ENCODE measurements at regions of chr5 and their contacts with region 1.

Region 1: GRCh38 chr5:79560771-79561524 is 47.0 kb upstream of the HOMER1 start:
- DNase-seq: no peak
- H3K4me3 ChIP-seq: no peak overlapping the region
- H3K27ac ChIP-seq: no peak overlapping the region
- H3K4me1 ChIP-seq: peaks cover 0 to 3% (median 0%) of the 10 kb centered on the region in 4 donors
- H3K27me3 ChIP-seq: no peaks in the 10 kb centered on the region
- CTCF ChIP-seq: no peak
- EP300 ChIP-seq: no peak
- POLR2A ChIP-seq: no peak

Region 2: GRCh38 chr5:79284846-79285245 is 276.1 kb before region 1 on chr5:
- in situ Hi-C with region 1: no loop called
- intact Hi-C with region 1: no loop called
- DNase-seq: no peak
- H3K4me3 ChIP-seq: no peak overlapping the region
- H3K27ac ChIP-seq: peak overlapping the region in 1 of 4 donors; percentile 20
- H3K4me1 ChIP-seq: peaks cover 0 to 3% (median 0%) of the 10 kb centered on the region in 4 donors
- H3K27me3 ChIP-seq: no peaks in the 10 kb centered on the region
- CTCF ChIP-seq: no peak
- EP300 ChIP-seq: no peak
- POLR2A ChIP-seq: no peak

Region 3: GRCh38 chr5:80083101-80083890 is 522.3 kb after region 1 on chr5:
- in situ Hi-C with region 1: no loop called
- intact Hi-C with region 1: loop called (anchors 10 kb)
- DNase-seq: no peak
- H3K4me3 ChIP-seq: peak overlapping the region in 1 of 4 donors; percentile 36
- H3K27ac ChIP-seq: peak overlapping the region; percentile 39 to 78 (median 60)
- H3K4me1 ChIP-seq: peaks cover 0 to 9% (median 4%) of the 10 kb centered on the region in 4 donors
- H3K27me3 ChIP-seq: no peaks in the 10 kb centered on the region
- CTCF ChIP-seq: peak; percentile 72 to 88 (median 78)
- EP300 ChIP-seq: no peak
- POLR2A ChIP-seq: no peak

Measured in transverse colon (tissue), 4 donors.